AG04450 (cell line): ENCODE measurements at regions of chr17 and their contacts with region 1.

Region 1: GRCh38 chr17:39186481-39187002 is 10.9 kb downstream of the CACNB1 start:
- DNase-seq: no peak
- H3K4me3 ChIP-seq: no peak overlapping the region
- H3K27ac ChIP-seq: no peak overlapping the region
- H3K27me3 ChIP-seq: no peaks in the 10 kb centered on the region
- CTCF ChIP-seq: no peak

Region 2: DNA sequence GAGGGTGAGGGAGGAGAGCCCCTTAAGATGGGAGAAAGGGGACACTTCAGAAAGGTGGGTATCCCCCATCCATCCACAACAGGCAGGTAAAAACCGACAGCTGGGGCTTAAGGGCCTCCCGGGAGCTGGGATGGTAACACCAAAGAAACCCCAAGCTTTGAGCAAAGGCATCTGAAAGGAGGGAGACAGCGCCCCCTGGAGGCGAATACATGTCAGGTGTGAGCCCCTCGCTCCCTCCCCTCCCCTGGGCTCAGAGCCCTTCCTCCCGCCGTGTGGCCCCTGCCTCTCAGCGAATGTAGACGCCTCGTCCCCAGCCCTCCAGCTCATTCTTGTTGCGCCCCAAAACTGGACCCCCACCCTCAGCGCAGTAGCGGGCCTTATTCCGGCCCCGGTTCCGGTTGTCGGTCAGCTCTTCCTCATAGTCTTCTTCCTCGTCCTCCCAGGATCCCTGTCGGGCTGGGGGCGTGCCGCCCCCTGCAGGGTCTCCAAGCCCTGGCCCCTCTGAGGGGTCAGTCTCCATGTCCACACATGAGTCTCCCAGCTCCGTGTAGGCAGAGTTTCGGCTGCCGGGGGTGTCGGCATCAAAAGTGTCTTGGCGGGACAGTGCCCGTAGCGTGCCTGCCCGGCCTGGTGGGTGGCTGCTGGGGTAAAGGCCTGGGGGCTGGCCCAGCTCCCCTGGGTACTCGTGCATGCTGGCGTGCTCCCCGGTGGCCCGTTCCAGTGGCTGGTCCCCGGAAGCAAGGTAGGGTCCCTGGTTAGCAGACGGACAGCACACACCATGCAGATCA is 11.4 kb before region 1 on chr17:
- CTCF ChIA-PET with region 1: interaction called, 11 read pairs
- POLR2A ChIA-PET with region 1: no interaction called
- DNase-seq: no peak
- H3K4me3 ChIP-seq: no peak overlapping the region
- H3K27ac ChIP-seq: no peak overlapping the region
- H3K27me3 ChIP-seq: no peaks in the 10 kb centered on the region
- CTCF ChIP-seq: peak; percentile 78